Activated T-helper 2 cell treated with anti-CD3 and anti-CD28 coated beads, Interferon-gamma antibody, Interleukin-2, Interleukin-4, amounts not matched to agents 10 μg/mL and 5 μg/mL and 100 μg/mL, durations not matched to agents 14 hours and 24 hours and 36 hours (primary cell): ENCODE measurements at regions of chr2 and their contacts with region 1.

Region 1: GRCh38 chr2:111883661-111884591 is at the start of gene ANAPC1:
- DNase-seq: peak; percentile 84
- H3K4me3 Mint-ChIP-seq: peak within 1 kb of the TSS; percentile 93
- H3K27ac Mint-ChIP-seq: peak within 1 kb of the TSS; percentile 90
- H3K4me1 Mint-ChIP-seq: peaks cover 7% of the 10 kb centered on the region
- H3K27me3 Mint-ChIP-seq: no peaks in the 10 kb centered on the region
- total RNA-seq, gene ANAPC1: 115 and 121 TPM in 2 replicates

Region 2: DNA sequence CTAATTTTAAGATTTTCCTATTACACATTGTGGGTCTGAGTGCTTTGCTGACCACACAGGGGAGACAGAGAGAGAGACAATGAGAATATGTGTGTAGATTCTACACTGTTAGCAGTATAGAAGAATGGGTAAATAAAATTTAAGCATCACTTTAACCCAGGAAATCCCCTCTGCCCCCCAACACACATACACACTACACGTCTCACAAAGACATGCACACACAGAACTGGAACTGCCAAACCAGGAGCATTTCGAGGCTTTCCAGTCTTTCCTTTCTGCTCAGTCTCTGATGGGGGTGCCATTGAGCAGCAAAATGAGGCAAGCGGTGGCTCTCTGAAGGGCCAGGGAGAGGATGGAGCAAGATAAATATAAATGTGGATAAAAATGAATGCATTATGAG is 16.9 kb after region 1 on chr2:
- intact Hi-C with region 1: loop called (anchors 2 kb)
- DNase-seq: no peak
- H3K4me3 Mint-ChIP-seq: no peak overlapping the region
- H3K27ac Mint-ChIP-seq: no peak overlapping the region
- H3K4me1 Mint-ChIP-seq: peaks cover 12% of the 10 kb centered on the region
- H3K27me3 Mint-ChIP-seq: peaks cover 34% of the 10 kb centered on the region

Region 3: DNA sequence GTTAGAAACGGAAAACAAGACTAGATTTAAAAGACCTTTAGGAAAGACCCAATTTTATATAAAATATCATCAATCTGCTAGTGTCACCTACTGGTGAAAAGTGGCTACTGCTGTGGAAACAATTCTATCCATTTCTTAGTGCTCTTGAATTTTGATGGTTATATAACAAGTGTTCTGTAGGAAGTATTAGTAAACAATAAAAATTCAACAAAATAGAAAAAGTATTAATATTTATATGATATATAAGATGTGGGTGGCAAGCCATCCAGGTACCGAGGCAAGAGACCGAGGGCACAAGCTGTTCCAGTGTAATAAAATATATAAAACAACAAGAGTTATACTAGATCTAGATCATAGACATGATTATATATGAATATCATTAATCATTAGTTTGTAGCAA is 165.0 kb after region 1 on chr2:
- intact Hi-C with region 1: loop called (anchors 1 kb)
- DNase-seq: no peak
- H3K4me3 Mint-ChIP-seq: no peak overlapping the region
- H3K27ac Mint-ChIP-seq: no peak overlapping the region
- H3K4me1 Mint-ChIP-seq: peaks cover 12% of the 10 kb centered on the region
- H3K27me3 Mint-ChIP-seq: peaks cover 19% of the 10 kb centered on the region

Region 4: DNA sequence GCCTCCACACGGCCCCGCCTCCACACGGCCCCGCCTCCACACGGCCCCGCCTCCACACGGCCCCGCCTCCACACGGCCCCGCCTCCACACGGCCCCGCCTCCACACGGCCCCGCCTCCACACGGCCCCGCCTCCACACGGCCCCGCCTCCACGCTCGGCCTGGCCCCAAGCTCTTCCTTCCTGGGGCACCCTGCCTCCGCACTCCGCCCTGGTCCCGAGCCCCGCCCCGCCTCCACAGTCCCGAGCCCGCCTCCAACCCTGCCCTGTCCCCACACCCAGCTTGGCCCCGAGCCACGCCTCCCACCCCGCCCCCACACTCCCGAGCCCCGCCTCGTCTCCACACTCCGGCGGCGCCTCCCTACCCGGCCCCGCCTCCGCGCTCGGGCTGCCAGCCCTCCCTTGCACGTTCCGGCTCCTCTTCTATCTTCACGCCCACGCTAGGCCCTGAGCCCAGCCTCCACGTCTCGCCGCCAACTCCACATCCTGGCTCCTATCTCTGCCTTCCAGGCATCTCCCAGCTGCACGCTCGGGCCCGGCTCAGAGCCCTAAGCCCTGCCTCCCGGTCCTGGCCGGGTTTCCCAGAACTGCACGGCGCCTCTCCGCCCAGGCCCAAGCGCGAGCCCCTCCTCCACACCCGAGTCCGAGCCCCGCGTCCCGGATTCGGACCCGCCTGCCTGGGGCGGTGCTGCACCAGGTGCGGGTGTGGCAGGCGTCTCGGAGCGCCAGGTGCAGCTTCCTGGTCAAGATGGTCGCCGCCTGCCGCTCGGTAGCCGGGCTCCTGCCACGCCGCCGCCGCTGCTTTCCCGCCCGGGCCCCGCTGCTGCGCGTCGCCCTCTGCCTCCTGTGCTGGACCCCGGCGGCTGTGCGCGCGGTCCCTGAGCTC is 171.2 kb after region 1 on chr2 and contains the start of gene TMEM87B:
- intact Hi-C with region 1: loop called (anchors 1 kb)
- DNase-seq: peak; percentile 97
- H3K4me3 Mint-ChIP-seq: peak within 1 kb of the TSS; percentile 98
- H3K27ac Mint-ChIP-seq: peak within 1 kb of the TSS; percentile 97
- H3K4me1 Mint-ChIP-seq: peaks cover 32% of the 10 kb centered on the region
- H3K27me3 Mint-ChIP-seq: peaks cover 3% of the 10 kb centered on the region
- total RNA-seq, gene TMEM87B: 15.8 and 16.5 TPM in 2 replicates

Region 5: DNA sequence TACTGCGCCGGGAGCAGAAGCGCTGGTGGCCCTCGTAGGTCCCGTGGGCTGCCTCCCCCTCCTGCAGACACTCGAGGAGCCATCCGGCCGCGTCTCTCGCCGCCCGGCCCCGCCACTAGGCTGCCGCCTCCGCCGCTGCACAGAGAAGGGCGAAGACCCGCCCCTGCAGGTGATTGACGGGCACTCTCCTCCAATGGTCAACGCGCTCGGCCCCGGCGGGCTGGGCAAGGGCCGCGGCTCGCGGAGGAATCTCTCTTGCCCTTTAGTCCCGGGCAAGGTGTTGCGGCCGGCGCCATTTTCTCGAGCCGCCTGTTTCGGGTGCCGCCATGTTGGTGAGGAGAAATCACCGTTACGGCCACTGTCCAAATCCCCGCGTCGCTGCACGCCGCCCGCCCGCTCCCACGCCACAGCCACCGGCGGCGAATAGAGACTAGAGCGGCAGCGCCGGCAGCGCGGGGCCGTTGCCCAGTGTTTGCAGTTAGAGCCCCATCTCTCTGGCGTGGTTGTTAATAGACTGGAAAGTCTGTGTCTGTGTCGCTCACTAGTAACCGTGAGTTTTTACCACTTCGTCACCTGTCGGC is 391.5 kb after region 1 on chr2 and contains the start of gene ZC3H6:
- intact Hi-C with region 1: loop called (anchors 5 kb)
- DNase-seq: peak; percentile 100
- H3K4me3 Mint-ChIP-seq: peak within 1 kb of the TSS; percentile 93
- H3K27ac Mint-ChIP-seq: peak within 1 kb of the TSS; percentile 98
- H3K4me1 Mint-ChIP-seq: peaks cover 10% of the 10 kb centered on the region
- H3K27me3 Mint-ChIP-seq: no peaks in the 10 kb centered on the region
- total RNA-seq, gene ZC3H6: 8.0 and 8.2 TPM in 2 replicates